Panc1 (cell line): ENCODE measurements at regions of chr2 and their contacts with region 1.

Region 1: DNA sequence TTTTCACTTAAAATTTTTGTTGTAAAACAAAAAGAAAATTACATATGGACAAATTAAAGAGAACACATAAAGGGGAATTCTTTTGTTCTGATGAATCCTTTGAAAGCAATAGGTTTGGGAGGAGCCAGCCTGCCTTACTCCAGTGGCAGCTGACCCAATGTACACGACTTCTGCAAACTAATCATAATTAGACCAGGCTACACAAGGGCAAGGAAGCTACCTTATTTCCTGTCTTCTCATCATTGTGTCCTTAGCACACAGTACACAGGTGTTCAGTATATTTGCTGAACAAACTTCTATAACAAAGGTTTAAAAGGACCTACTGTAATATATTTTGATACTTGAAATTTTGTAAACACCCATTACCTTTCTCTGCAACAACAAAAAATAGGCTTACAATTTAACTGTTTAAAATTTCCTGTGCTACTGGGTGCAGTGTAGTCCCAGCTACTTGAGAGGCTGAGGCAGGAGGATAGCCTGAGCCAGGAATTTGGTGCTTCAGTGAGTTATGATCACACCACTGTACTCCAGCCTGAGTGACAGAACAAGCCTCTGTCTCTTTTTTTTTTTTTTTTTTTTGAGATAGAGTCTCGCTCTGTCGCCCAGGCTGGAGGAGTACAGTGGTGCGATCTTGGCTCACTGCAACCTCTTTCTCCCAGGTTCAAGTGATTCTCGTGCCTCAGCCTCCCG is 18.9 kb downstream of the KCNG3 start:
- DNase-seq: no peak
- ATAC-seq: no peak
- H3K4me3 ChIP-seq: no peak overlapping the region
- H3K27ac ChIP-seq: no peak overlapping the region
- H3K4me1 ChIP-seq: no peaks in the 10 kb centered on the region
- H3K27me3 ChIP-seq: no peaks in the 10 kb centered on the region
- CTCF ChIP-seq: no peak

Region 2: DNA sequence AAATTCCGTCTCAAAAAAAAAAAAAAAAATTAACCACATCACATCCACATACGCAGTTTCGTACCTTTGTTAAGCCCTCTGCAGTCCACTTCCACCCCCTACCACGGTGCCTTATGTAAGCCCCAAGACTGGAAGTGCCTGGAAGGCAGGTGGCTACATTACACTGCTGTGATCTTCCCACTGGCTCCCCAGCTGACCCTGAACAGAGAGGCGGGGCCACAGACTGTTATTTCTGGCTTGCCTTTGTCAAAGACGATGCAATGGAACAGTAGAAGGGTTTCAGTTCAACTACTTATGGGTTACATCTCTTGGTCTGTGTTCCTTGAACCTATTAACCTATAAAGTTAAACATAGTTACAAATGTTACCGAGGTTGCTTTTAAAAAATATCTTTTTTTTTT is 98.2 kb before region 1 on chr2:
- CTCF ChIA-PET with region 1: no interaction called
- POLR2A ChIA-PET with region 1: no interaction called
- in situ Hi-C with region 1: no loop called
- intact Hi-C with region 1: no loop called
- DNase-seq: no peak
- ATAC-seq: no peak
- H3K4me3 ChIP-seq: no peak overlapping the region
- H3K27ac ChIP-seq: no peak overlapping the region
- H3K4me1 ChIP-seq: no peaks in the 10 kb centered on the region
- H3K27me3 ChIP-seq: no peaks in the 10 kb centered on the region
- CTCF ChIP-seq: no peak

Region 3: DNA sequence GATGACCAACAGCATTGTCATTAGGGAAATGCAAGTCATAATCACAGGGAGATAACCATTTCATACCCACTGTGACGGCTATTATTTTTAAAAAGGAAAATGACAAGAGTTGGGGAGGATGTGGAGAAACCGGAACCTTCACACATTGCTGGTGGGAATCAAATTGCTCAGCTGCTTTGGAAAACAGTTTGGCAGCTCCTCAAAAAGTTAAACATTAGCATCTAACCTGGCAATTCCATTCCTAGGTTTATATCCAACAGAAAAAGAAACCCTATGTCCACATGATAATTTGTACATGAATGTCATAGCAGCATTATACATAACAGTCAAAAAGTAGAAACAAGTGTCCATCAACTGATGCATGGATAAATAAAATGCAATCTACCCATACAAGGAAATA is 39.3 kb before region 1 on chr2:
- CTCF ChIA-PET with region 1: interaction called, 11 read pairs
- POLR2A ChIA-PET with region 1: no interaction called
- in situ Hi-C with region 1: no loop called
- intact Hi-C with region 1: no loop called
- DNase-seq: no peak
- ATAC-seq: no peak
- H3K4me3 ChIP-seq: no peak overlapping the region
- H3K27ac ChIP-seq: no peak overlapping the region
- H3K4me1 ChIP-seq: no peaks in the 10 kb centered on the region
- H3K27me3 ChIP-seq: no peaks in the 10 kb centered on the region
- CTCF ChIP-seq: no peak

Region 4: DNA sequence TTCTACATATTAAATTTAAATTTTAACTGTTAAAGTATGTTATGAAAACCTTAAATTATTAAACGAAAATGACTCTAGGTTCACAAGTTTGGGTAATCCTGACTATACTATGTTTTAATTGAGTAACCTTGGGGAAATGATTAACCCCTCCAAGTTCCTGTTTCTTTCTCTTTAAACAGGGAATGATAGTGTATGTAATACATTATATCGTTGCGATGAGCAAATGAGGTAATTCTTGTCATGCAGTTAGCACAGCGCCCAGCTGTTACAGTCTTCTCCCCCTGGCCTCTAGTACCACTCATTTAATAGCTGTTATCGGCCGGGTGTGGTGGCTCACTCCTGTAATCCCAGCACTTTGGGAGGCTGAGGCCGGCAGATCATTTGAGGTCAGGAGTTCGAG is 173.9 kb after region 1 on chr2:
- CTCF ChIA-PET with region 1: no interaction called
- POLR2A ChIA-PET with region 1: no interaction called
- in situ Hi-C with region 1: no loop called
- intact Hi-C with region 1: no loop called
- DNase-seq: no peak
- ATAC-seq: no peak
- H3K4me3 ChIP-seq: no peak overlapping the region
- H3K27ac ChIP-seq: no peak overlapping the region
- H3K4me1 ChIP-seq: no peaks in the 10 kb centered on the region
- H3K27me3 ChIP-seq: no peaks in the 10 kb centered on the region
- CTCF ChIP-seq: no peak

Region 5: DNA sequence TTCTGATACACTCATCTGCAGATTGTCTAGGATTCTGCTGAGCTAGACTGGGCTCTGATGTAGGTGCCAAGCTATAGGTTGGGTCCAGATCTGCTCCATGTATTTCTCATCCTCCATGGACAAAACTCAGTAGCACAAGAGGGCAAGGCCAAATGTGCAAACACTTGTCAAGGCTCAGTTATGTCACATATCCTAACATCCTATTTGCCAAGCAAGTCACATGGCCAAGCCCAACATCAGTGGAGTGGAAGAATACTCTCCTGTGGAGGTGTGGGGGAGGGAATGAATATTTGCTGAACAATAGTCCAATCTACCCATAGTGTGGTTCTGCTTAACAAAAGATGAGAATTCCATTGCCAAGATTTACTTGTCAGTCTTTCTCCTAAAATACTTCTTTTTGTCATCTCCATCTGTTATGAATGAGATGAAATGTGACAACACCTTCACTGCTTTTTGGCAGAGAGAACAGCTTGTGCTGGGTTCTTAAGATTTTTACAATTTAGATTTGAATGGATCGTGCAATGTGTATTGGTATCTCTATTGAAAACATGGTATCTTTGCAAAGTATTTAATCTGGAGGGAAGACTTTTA is 199.2 kb after region 1 on chr2:
- CTCF ChIA-PET with region 1: interaction called, 17 read pairs
- POLR2A ChIA-PET with region 1: no interaction called
- in situ Hi-C with region 1: no loop called
- intact Hi-C with region 1: no loop called
- DNase-seq: no peak
- ATAC-seq: no peak
- H3K4me3 ChIP-seq: no peak overlapping the region
- H3K27ac ChIP-seq: no peak overlapping the region
- H3K4me1 ChIP-seq: no peaks in the 10 kb centered on the region
- H3K27me3 ChIP-seq: no peaks in the 10 kb centered on the region
- CTCF ChIP-seq: no peak